SK-N-SH (cell line): ENCODE measurements at regions of chr3 and their contacts with region 1.

Region 1: DNA sequence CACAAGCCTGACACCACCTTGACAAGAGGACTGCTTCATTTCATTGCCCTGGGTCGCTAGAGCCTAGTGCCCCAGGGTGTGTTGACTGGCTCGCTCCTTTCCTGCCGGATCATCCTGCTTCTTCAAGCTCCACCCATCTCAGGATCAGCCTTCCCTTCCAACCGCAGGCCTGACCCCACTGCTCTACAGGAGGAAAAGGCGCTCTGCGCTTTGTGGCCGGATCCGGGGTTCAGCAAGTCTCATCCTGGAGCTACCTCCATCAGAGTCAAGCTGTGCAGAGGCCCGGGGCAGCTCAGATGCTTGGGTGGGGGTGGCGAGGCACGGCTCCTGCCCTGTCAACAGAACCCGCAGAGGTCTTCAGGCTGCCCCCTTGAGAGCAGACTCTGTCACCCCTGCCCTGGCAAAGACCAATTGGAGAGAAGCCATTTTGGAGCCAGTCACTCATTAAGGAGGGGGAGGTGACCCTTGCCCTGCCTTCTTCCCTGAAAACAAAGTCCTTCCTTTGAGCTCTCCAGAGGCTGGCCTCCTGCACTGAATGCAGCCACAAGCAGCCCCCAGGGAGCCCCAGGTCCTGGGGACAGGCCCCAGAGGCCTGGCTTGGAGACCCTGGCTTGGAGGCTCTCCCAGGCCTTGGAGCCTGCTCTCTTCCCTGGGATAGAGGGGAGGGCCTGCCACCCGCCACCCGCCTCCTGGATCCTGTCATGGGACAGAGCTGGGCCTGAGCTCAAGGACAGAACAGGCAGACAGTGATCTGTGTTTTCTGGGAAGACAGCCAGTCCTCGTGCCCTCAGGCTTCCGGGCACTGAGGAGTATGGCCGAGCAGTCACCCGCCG is 80.3 kb downstream of the CPN2 start:
- DNase-seq: peak; percentile 93
- H3K4me3 ChIP-seq: no peak overlapping the region
- H3K27ac ChIP-seq: peak overlapping the region; percentile 48 to 99
- H3K4me1 ChIP-seq: peaks cover 6 to 72% of the 10 kb centered on the region in 2 experiments; a peak in 3 of 4 replicates
- H3K27me3 ChIP-seq: no peaks in the 10 kb centered on the region
- CTCF ChIP-seq: no peak
- EP300 ChIP-seq: peak in 1 of 2 experiments; percentile 98; a peak in 2 of 4 replicates
- RAD21 ChIP-seq: peak; percentile 42; the same call in 1 of the 2 replicates

Region 2: GRCh38 chr3:194141415-194142155 is 129.3 kb before region 1 on chr3:
- CTCF ChIA-PET with region 1: interaction called, 24 read pairs
- POLR2A ChIA-PET with region 1: interaction called, 49 read pairs
- DNase-seq: peak; percentile 91
- H3K4me3 ChIP-seq: peak overlapping the region; percentile 44 to 46
- H3K27ac ChIP-seq: peak overlapping the region; percentile 99
- H3K4me1 ChIP-seq: peaks cover 15 to 54% of the 10 kb centered on the region in 2 experiments
- H3K27me3 ChIP-seq: no peaks in the 10 kb centered on the region
- CTCF ChIP-seq: no peak
- EP300 ChIP-seq: peak; percentile 43 to 66; a peak in 3 of 4 replicates
- RAD21 ChIP-seq: peak; percentile 31

Region 3: DNA sequence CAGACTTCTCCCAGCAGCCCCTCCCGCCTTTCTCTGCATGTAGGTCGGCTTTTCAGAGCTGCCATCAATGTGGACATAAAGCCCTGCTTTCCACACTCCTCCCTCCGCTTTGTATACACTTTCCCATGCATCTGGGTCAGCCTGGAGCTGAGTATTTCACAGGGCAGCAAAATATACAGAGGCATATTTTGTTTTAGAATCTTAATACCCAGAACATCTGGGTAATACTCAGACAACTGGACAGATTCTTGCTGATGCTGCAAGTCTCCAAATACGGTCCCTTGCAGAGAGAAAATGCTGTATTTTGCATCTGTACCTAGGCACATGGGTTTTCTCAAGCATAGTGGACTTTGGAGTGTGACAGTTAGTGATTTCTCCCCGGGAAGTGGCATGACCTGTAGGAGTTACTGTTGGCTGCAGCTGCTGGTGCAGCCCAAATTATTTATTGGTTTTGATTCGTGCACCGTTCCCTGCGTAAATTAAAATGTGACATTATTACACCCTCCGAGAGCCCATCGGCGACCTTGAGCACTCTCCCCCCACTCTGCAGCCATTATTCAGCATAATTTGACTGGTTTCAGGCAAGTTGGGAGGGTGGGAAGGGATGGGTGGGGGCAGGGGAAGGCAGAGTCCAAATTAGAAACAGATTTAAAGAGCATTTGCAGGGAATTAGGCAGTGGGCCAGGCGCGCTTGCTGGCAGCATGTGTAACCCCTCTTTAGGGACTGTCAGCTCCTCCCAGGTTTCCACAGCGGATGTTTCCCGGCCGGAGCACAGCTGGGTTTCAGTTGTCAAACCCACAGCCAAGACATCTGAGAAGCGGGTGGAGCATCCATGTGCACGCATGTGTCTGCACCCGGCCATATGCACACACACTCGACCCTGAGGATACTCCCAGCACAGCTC is 20.5 kb before region 1 on chr3:
- CTCF ChIA-PET with region 1: interaction called, 18 read pairs
- POLR2A ChIA-PET with region 1: interaction called, 27 read pairs
- DNase-seq: peak; percentile 84
- H3K4me3 ChIP-seq: no peak overlapping the region
- H3K27ac ChIP-seq: peak overlapping the region in 1 of 2 experiments; percentile 95; a peak in 3 of 4 replicates
- H3K4me1 ChIP-seq: peaks cover 0 to 59% of the 10 kb centered on the region in 2 experiments; a peak in 3 of 4 replicates
- H3K27me3 ChIP-seq: peaks cover 20% of the 10 kb centered on the region
- CTCF ChIP-seq: no peak
- EP300 ChIP-seq: no peak; a peak in 1 of 4 replicates
- RAD21 ChIP-seq: no peak